Caco-2 (cell line): ENCODE measurements at regions of chr6 and their contacts with region 1.

Region 1: DNA sequence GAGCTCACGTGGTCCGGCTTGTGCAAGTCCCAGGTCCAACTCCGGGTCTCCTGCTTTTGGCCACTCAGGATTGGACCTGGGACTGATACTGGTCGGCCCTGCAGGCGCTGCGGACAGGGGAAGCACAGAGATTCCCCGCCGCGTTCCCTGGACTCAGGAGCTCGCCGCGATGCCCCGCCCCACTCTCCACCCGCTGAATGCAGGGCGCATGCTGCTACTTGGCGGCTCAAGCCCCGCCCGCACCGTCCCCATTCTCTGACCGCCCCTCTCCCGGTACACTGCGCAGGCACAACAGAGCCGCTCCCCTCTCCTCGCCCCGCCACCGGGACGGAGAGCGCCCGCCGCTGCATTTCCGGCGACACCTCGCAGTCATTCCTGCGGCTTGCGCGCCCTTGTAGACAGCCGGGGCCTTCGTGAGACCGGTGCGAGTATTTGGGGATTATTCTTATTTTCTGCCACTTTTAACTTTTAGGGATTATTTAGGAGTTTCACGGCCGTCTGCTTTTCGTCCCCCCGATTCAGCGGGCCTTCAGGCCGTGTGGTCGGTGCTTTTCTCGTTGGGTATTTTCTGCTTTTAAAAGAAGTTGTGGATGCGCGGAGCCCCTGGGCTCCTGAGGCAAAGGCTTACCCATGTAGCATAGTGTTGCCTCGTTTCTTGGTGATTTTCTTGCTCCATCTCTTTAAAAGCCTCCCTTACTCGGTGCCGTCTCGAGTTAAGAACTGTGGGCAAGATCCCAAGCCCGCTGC is at the start of gene TMEM14C:
- DNase-seq: peak; percentile 99
- H3K4me3 ChIP-seq: peak within 1 kb of the TSS; percentile 68
- H3K4me3 Mint-ChIP-seq: peak within 1 kb of the TSS; percentile 96
- H3K27ac Mint-ChIP-seq: peak within 1 kb of the TSS; percentile 97
- H3K4me1 ChIP-seq: peaks cover 6% of the 10 kb centered on the region
- H3K4me1 Mint-ChIP-seq: peaks cover 15% of the 10 kb centered on the region
- H3K27me3 ChIP-seq: no peaks in the 10 kb centered on the region
- H3K27me3 Mint-ChIP-seq: no peaks in the 10 kb centered on the region
- CTCF ChIP-seq: no peak
- total RNA-seq, gene TMEM14C: 116 and 134 TPM in 2 replicates

Region 2: GRCh38 chr6:10643201-10643651 is 79.8 kb before region 1 on chr6:
- CTCF ChIA-PET with region 1: no interaction called
- POLR2A ChIA-PET with region 1: no interaction called
- intact Hi-C with region 1: no loop called
- DNase-seq: no peak
- H3K4me3 ChIP-seq: no peak overlapping the region
- H3K4me3 Mint-ChIP-seq: no peak overlapping the region
- H3K27ac Mint-ChIP-seq: no peak overlapping the region
- H3K4me1 ChIP-seq: no peaks in the 10 kb centered on the region
- H3K4me1 Mint-ChIP-seq: peaks cover 10% of the 10 kb centered on the region
- H3K27me3 ChIP-seq: no peaks in the 10 kb centered on the region
- H3K27me3 Mint-ChIP-seq: no peaks in the 10 kb centered on the region
- CTCF ChIP-seq: no peak

Region 3: GRCh38 chr6:10733863-10734262 is 10.9 kb after region 1 on chr6:
- CTCF ChIA-PET with region 1: no interaction called
- POLR2A ChIA-PET with region 1: interaction called, 3 read pairs
- intact Hi-C with region 1: loop called (anchors 1 kb)
- DNase-seq: no peak
- H3K4me3 ChIP-seq: no peak overlapping the region
- H3K4me3 Mint-ChIP-seq: peak overlapping the region; percentile 15
- H3K27ac Mint-ChIP-seq: peak overlapping the region; percentile 66
- H3K4me1 ChIP-seq: peaks cover 25% of the 10 kb centered on the region
- H3K4me1 Mint-ChIP-seq: peaks cover 13% of the 10 kb centered on the region
- H3K27me3 ChIP-seq: no peaks in the 10 kb centered on the region
- H3K27me3 Mint-ChIP-seq: no peaks in the 10 kb centered on the region
- CTCF ChIP-seq: no peak

Region 4: DNA sequence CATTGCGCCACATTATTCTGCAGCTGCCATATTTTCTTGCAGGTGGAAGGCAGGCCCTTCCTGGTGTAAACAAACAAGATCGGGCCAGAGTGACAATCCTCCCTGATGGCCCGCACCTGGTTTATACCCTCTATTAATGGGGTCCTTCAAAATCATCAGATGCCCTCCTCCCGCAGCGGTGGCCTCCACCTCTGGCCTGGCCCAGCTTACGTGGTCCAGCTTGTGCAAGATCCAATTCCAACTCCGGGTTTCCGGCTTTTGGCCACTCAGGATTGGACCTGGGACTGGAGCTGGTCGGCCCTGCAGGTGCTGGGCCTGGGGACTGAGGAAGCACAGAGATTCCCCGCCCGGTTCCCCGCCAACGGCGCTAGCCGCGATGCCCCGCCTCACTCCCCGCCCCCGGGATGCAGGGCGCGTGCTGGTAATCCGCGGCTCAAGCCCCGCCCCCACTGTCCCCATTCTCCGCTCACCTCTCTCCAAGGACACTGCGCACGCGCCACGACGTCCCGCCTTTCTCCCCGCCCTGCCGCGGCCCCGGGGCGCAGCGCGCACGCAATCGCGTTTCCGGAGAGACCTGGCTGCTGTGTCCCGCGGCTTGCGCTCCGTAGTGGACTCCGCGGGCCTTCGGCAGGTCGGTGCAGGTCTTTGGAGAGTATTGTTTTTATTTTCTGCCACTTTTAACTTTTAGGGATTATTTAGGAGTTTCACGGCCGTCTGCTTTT is 24.4 kb after region 1 on chr6 and contains the start of gene TMEM14B:
- CTCF ChIA-PET with region 1: interaction called, 3 read pairs
- POLR2A ChIA-PET with region 1: interaction called, 36 read pairs
- intact Hi-C with region 1: loop called (anchors 1 kb)
- DNase-seq: peak; percentile 98 to 100
- H3K4me3 ChIP-seq: peak within 1 kb of the TSS; percentile 79
- H3K4me3 Mint-ChIP-seq: peak within 1 kb of the TSS; percentile 77
- H3K27ac Mint-ChIP-seq: peak within 1 kb of the TSS; percentile 94
- H3K4me1 ChIP-seq: peaks cover 23% of the 10 kb centered on the region
- H3K4me1 Mint-ChIP-seq: peaks cover 20% of the 10 kb centered on the region
- H3K27me3 ChIP-seq: no peaks in the 10 kb centered on the region
- H3K27me3 Mint-ChIP-seq: no peaks in the 10 kb centered on the region
- CTCF ChIP-seq: no peak
- total RNA-seq, gene TMEM14B: 104 and 105 TPM in 2 replicates

Region 5: GRCh38 chr6:10759312-10759839 is 36.4 kb after region 1 on chr6:
- CTCF ChIA-PET with region 1: no interaction called
- POLR2A ChIA-PET with region 1: interaction called, 3 read pairs
- intact Hi-C with region 1: loop called (anchors 1 kb)
- DNase-seq: peak; percentile 46 to 68
- H3K4me3 ChIP-seq: no peak overlapping the region
- H3K4me3 Mint-ChIP-seq: no peak overlapping the region
- H3K27ac Mint-ChIP-seq: peak overlapping the region; percentile 80
- H3K4me1 ChIP-seq: peaks cover 4% of the 10 kb centered on the region; the same call in 1 of the 2 replicates
- H3K4me1 Mint-ChIP-seq: peaks cover 6% of the 10 kb centered on the region
- H3K27me3 ChIP-seq: no peaks in the 10 kb centered on the region
- H3K27me3 Mint-ChIP-seq: no peaks in the 10 kb centered on the region
- CTCF ChIP-seq: peak; percentile 42 to 44